GM12878 (cell line): ENCODE measurements at regions of chr1 and their contacts with region 1.

Region 1: DNA sequence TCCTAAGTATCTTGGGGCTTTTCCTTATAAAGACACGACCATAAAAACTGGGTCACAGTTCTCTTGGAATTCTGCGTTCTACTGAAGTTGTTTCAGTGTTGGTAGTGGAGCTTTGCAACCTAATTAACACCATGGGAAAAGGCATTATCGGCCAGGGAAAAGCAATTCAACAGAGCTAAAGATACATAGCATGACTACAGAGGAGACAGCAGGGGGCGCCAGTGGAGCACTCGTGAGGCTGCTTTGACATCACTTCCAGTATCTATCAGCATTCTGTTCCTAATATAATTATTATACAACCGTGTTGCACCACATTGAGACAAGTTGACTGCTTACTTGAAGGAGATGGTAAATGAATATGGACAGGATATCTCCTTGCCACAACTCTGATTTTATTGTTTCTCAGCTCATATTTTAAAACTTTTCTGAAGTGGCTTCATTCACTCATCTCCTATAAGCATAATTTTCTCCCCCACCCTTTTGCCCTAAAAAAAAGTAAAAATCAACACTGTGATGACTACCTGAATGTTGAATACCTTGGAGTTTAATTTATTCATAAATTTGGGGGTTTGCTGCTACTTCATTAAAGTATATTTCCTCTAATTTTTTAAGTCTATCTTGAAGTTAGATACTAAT is 39.4 kb downstream of the ZP4 start:
- DNase-seq: no peak
- ATAC-seq: peak; percentile 91
- H3K4me3 ChIP-seq: no peak overlapping the region
- H3K27ac ChIP-seq: no peak overlapping the region
- H3K4me1 ChIP-seq: no peaks in the 10 kb centered on the region
- H3K27me3 ChIP-seq: no peaks in the 10 kb centered on the region; a peak in 1 of 4 replicates
- CTCF ChIP-seq: peak; percentile 44 to 59 (median 58); a peak in 5 of 6 replicates
- EP300 ChIP-seq: no peak
- POLR2A ChIP-seq: no peak
- RAD21 ChIP-seq: peak; percentile 54

Region 2: GRCh38 chr1:237774246-237774645 is 77.1 kb before region 1 on chr1:
- CTCF ChIA-PET with region 1: no interaction called
- POLR2A ChIA-PET with region 1: no interaction called
- RAD21 ChIA-PET with region 1: no interaction called
- SMC1A ChIA-PET with region 1: no interaction called
- in situ Hi-C with region 1: no loop called
- intact Hi-C with region 1: no loop called
- DNase-seq: no peak
- ATAC-seq: no peak
- H3K4me3 ChIP-seq: no peak overlapping the region
- H3K27ac ChIP-seq: no peak overlapping the region
- H3K4me1 ChIP-seq: no peaks in the 10 kb centered on the region
- H3K27me3 ChIP-seq: no peaks in the 10 kb centered on the region
- CTCF ChIP-seq: no peak
- EP300 ChIP-seq: no peak
- POLR2A ChIP-seq: no peak
- RAD21 ChIP-seq: no peak

Region 3: DNA sequence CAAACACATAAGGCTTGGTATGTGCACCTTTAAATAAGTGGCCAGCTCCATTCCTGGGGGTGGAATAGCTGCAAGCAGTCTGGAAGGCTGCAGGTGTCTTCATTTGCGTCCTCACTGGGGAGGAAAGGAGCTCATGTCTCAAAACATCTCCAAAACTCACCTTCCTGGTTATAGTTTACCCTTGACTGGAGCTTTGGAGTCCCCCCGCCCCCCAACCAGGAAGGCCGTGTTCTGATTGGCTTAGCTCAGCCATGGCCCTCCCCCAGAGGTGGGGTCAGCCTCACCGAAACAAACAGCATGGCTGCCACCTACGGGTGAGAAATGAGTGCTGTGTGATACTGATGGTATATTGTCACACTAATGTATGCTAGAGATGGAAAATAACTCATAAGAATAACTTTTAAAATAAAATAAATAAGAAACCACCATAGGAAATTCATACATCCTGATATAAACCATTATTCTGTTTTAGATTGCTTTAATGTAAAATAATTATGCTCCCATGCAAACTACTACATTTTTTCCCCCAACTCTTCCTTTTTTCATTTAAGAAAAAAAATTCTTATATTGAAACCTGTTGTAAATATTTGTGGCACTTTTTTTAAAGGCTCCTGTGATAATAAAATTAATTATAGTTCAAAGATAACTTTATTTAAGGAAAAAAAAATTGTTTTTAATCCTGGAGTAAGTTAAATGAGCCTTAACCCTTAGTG is 51.4 kb before region 1 on chr1:
- CTCF ChIA-PET with region 1: no interaction called
- POLR2A ChIA-PET with region 1: no interaction called
- RAD21 ChIA-PET with region 1: no interaction called
- SMC1A ChIA-PET with region 1: no interaction called
- in situ Hi-C with region 1: no loop called
- intact Hi-C with region 1: loop called (anchors 10 kb)
- DNase-seq: peak; percentile 9
- ATAC-seq: peak; percentile 100
- H3K4me3 ChIP-seq: no peak overlapping the region
- H3K27ac ChIP-seq: no peak overlapping the region
- H3K4me1 ChIP-seq: no peaks in the 10 kb centered on the region
- H3K27me3 ChIP-seq: no peaks in the 10 kb centered on the region
- CTCF ChIP-seq: peak; percentile 22 to 32 (median 22); a peak in 2 of 6 replicates
- EP300 ChIP-seq: no peak
- POLR2A ChIP-seq: no peak
- RAD21 ChIP-seq: no peak; the same call in 1 of the 2 replicates

Region 4: GRCh38 chr1:237913362-237913761 is 62.0 kb after region 1 on chr1:
- CTCF ChIA-PET with region 1: no interaction called
- POLR2A ChIA-PET with region 1: no interaction called
- RAD21 ChIA-PET with region 1: no interaction called
- SMC1A ChIA-PET with region 1: no interaction called
- in situ Hi-C with region 1: no loop called
- intact Hi-C with region 1: no loop called
- DNase-seq: no peak
- ATAC-seq: peak; percentile 63
- H3K4me3 ChIP-seq: no peak overlapping the region
- H3K27ac ChIP-seq: no peak overlapping the region
- H3K4me1 ChIP-seq: no peaks in the 10 kb centered on the region
- H3K27me3 ChIP-seq: no peaks in the 10 kb centered on the region
- CTCF ChIP-seq: no peak; a peak in 1 of 6 replicates
- EP300 ChIP-seq: no peak
- POLR2A ChIP-seq: no peak
- RAD21 ChIP-seq: no peak

Region 5: GRCh38 chr1:238252033-238252802 is 400.9 kb after region 1 on chr1:
- CTCF ChIA-PET with region 1: interaction called, 3 read pairs
- POLR2A ChIA-PET with region 1: interaction called, 5 read pairs
- RAD21 ChIA-PET with region 1: no interaction called
- SMC1A ChIA-PET with region 1: interaction called, 3 read pairs
- in situ Hi-C with region 1: no loop called
- intact Hi-C with region 1: loop called (anchors 5 kb)
- DNase-seq: no peak
- ATAC-seq: peak; percentile 97
- H3K4me3 ChIP-seq: no peak overlapping the region
- H3K27ac ChIP-seq: no peak overlapping the region
- H3K4me1 ChIP-seq: no peaks in the 10 kb centered on the region
- H3K27me3 ChIP-seq: no peaks in the 10 kb centered on the region
- CTCF ChIP-seq: peak; percentile 30 to 56 (median 53); a peak in 5 of 6 replicates
- EP300 ChIP-seq: no peak
- POLR2A ChIP-seq: no peak
- RAD21 ChIP-seq: peak; percentile 50

Region 6: DNA sequence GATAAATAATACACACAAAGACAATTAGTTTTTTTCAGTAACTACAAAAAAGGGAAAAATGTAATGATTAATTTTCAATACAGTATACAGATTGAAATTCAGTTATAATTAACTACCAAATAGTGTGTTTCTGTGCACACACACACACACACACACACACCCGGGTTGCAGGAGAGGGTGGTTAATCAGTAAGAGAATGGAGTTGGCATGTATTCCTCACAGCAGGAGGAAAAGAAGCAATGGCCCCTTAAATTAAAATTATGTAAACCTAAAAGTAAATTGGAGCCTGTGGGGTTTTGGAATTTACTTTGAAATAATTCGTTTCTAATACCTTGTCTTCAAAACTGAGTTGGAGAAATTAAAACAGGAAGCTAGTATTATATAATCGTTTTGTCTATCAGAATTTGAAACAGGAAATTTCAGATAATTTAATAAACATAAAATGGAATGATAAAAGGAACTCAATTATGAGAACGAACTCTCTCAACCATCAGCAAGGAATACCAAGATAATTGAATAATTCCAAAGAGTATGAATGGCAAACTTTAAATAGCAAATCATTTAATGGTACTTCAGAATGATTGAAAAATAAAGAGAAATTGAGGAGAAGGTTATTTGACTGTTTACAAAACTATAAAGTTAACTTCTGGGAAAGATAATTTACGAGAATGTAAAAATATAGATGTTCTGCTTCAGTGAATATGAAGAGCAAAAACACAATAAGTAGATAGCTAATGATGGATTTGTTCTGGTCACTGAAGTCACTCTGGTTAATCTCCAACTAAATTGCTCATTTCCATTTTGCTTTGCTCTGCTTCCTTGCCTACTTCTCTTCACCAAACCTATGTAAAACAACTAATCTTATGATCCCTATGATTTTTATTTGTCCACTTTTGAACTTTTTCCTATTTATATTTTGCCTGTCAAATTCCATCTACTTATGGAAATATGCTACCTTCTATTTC is 587.3 kb after region 1 on chr1:
- CTCF ChIA-PET with region 1: no interaction called
- POLR2A ChIA-PET with region 1: no interaction called
- RAD21 ChIA-PET with region 1: no interaction called
- SMC1A ChIA-PET with region 1: no interaction called
- in situ Hi-C with region 1: no loop called
- intact Hi-C with region 1: loop called (anchors 5 kb)
- DNase-seq: no peak
- ATAC-seq: no peak
- H3K4me3 ChIP-seq: no peak overlapping the region
- H3K27ac ChIP-seq: no peak overlapping the region
- H3K4me1 ChIP-seq: no peaks in the 10 kb centered on the region
- H3K27me3 ChIP-seq: no peaks in the 10 kb centered on the region
- CTCF ChIP-seq: no peak
- EP300 ChIP-seq: no peak
- POLR2A ChIP-seq: no peak
- RAD21 ChIP-seq: no peak

Region 7: DNA sequence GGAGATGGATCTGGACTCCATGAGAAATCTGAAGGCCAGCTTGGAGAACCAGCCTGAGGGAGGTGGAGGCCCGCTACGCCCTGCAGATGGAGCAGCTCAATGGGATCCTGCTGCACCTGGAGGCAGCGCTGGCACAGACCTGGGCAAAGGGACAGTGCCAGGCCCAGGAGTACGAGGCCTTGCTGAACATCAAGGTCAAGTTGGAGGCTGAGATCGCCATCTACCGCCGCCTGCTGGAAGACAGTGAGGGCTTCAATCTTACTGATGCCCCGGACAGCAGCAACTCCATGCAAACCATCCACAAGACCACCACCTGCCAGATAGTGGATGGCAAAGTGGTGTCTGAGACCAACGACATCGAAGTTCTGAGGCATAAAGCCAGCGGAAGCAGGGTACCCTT is 640.9 kb after region 1 on chr1:
- CTCF ChIA-PET with region 1: no interaction called
- POLR2A ChIA-PET with region 1: interaction called, 3 read pairs
- RAD21 ChIA-PET with region 1: no interaction called
- SMC1A ChIA-PET with region 1: no interaction called
- in situ Hi-C with region 1: no loop called
- intact Hi-C with region 1: loop called (anchors 5 kb)
- DNase-seq: no peak
- ATAC-seq: no peak
- H3K4me3 ChIP-seq: no peak overlapping the region
- H3K27ac ChIP-seq: no peak overlapping the region
- H3K4me1 ChIP-seq: no peaks in the 10 kb centered on the region
- H3K27me3 ChIP-seq: no peaks in the 10 kb centered on the region
- CTCF ChIP-seq: no peak
- EP300 ChIP-seq: no peak
- POLR2A ChIP-seq: no peak
- RAD21 ChIP-seq: no peak

Region 8: GRCh38 chr1:238951809-238952208 is 1100.5 kb after region 1 on chr1:
- CTCF ChIA-PET with region 1: no interaction called
- POLR2A ChIA-PET with region 1: no interaction called
- RAD21 ChIA-PET with region 1: no interaction called
- SMC1A ChIA-PET with region 1: no interaction called
- in situ Hi-C with region 1: no loop called
- intact Hi-C with region 1: loop called (anchors 5 kb)
- DNase-seq: no peak
- ATAC-seq: peak; percentile 67
- H3K4me3 ChIP-seq: no peak overlapping the region
- H3K27ac ChIP-seq: no peak overlapping the region
- H3K4me1 ChIP-seq: no peaks in the 10 kb centered on the region
- H3K27me3 ChIP-seq: no peaks in the 10 kb centered on the region
- CTCF ChIP-seq: no peak; a peak in 1 of 6 replicates
- EP300 ChIP-seq: no peak
- POLR2A ChIP-seq: no peak
- RAD21 ChIP-seq: peak; percentile 30; the same call in 1 of the 2 replicates